ENCODE measurements at regions of chr2 and their contacts with region 1.

Region 1: GRCh38 chr2:230106810-230107209 is 38.1 kb upstream of the SLC16A14 start:
- DNase-seq: peak in 1 of 2 experiments; percentile 15
- H3K4me3 ChIP-seq: no peak overlapping the region
- H3K27ac ChIP-seq: peak overlapping the region; percentile 27; the same call in 1 of the 2 replicates
- H3K4me1 ChIP-seq: peaks cover 12% of the 10 kb centered on the region
- H3K27me3 ChIP-seq: no peaks in the 10 kb centered on the region
- CTCF ChIP-seq: no peak

Region 2: GRCh38 chr2:230244211-230244610 is 137.4 kb after region 1 on chr2:
- CTCF ChIA-PET with region 1: no interaction called
- POLR2A ChIA-PET with region 1: interaction called, 10 read pairs
- intact Hi-C with region 1: no loop called
- DNase-seq: no peak
- H3K4me3 ChIP-seq: no peak overlapping the region
- H3K27ac ChIP-seq: no peak overlapping the region
- H3K4me1 ChIP-seq: no peaks in the 10 kb centered on the region
- H3K27me3 ChIP-seq: no peaks in the 10 kb centered on the region
- CTCF ChIP-seq: no peak